Ovary (tissue), 10 donors: ENCODE measurements at regions of chr16 and their contacts with region 1.

Region 1: DNA sequence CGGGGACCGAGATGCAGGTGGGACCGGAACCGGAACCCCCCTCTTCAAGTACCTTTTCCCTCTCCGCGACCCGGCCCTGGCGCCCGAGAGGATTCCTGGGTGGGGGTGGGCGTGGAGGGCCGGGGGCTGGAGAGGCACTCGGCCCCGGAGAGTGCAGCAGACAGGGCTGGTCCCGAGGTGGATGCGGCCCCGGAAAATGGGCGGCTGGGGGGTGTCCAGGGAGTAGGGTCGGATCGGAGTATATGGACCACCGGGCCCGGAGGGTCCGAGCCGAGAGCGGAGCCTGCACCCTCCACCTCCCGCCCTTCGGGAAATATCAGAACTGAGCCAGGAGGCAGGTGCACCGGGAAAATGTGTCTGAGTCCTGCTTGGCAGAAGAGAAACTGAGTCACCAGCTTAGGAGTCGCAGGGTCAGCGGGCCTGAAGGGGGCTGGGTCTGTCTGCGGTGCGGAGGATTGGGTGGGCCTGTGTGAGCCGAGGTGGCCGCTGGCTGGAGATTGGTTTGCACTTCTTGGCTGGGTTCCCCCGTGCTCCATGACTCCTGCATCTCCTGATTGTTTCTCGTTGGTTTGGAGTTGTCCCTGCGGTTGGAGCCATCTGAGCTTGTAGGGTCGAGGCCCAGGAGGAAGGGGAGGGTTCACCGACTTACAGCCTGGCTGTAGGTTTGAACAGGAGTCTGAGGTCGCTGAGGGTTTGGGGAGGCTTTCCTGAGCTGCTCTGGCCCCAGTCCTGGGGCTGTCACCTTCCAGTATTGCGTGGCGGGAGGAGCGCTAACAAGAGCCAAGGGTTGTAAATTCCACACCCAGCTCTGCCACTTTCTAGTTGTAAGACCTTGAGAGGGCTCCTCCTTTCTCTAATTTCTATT is 518 bp downstream of the SH2B1 start:
- DNase-seq: peak; percentile 47 to 64 (median 55)
- H3K4me3 ChIP-seq: peak overlapping the region; percentile 98
- H3K27ac ChIP-seq: peak overlapping the region; percentile 79 to 85
- H3K4me1 ChIP-seq: peaks cover 2% of the 10 kb centered on the region
- H3K27me3 ChIP-seq: no peaks in the 10 kb centered on the region
- CTCF ChIP-seq: no peak
- EP300 ChIP-seq: no peak
- POLR2A ChIP-seq: no peak

Region 2: DNA sequence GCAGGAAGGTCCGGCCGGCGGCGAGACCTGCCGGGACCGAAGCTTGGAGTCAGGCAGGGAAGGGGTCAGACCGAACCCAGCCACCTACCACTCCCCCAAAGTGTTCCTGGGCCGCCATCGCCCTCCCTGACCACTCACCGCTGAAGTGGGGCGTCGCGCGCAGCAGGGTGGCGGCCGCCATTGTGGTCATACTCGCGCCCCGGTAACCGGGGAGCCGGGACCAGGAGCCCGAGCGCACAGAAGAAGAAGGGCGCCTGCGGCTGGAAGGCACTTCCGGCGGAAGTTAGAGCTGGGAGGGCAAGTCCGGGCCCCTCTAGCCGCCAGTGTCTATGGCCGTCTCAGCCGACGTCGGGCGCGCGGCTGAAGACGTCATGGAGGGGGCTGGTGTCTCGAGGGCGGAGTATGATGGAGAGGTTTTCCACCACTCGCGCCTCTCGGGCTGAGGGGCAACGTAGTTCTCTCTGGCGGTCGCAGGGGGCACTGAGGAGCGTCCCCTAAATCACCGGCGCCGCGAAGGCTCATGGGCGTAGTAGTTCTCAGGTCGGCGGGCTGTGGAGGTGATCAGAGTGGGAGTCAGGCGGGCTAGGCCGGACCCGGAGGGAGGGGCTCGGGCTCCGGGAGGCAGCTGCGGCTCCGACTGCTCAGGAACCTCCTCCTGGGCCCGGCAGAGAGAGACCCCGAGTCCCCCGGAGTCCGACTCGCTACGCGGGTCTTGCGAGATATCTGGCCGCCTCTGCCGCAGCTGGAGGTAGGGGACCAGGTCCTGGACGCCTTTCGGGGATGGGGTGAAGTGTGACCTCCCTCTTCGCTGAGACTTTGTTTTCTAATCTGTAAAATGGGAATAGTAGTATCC is 17.9 kb before region 1 on chr16 and contains the start of gene TUFM:
- intact Hi-C with region 1: loop called in 2 of 4 experiments (anchors 2 kb)
- DNase-seq: peak; percentile 97 to 98 (median 97)
- H3K4me3 ChIP-seq: peak within 1 kb of the TSS; percentile 99
- H3K27ac ChIP-seq: peak within 1 kb of the TSS; percentile 82 to 83
- H3K4me1 ChIP-seq: peaks cover 2% of the 10 kb centered on the region
- H3K27me3 ChIP-seq: no peaks in the 10 kb centered on the region
- CTCF ChIP-seq: peak; percentile 56 to 93 (median 82)
- EP300 ChIP-seq: no peak
- POLR2A ChIP-seq: peak; percentile 22
- total RNA-seq, gene TUFM: 75.7 to 123 (median 105) TPM

Region 3: DNA sequence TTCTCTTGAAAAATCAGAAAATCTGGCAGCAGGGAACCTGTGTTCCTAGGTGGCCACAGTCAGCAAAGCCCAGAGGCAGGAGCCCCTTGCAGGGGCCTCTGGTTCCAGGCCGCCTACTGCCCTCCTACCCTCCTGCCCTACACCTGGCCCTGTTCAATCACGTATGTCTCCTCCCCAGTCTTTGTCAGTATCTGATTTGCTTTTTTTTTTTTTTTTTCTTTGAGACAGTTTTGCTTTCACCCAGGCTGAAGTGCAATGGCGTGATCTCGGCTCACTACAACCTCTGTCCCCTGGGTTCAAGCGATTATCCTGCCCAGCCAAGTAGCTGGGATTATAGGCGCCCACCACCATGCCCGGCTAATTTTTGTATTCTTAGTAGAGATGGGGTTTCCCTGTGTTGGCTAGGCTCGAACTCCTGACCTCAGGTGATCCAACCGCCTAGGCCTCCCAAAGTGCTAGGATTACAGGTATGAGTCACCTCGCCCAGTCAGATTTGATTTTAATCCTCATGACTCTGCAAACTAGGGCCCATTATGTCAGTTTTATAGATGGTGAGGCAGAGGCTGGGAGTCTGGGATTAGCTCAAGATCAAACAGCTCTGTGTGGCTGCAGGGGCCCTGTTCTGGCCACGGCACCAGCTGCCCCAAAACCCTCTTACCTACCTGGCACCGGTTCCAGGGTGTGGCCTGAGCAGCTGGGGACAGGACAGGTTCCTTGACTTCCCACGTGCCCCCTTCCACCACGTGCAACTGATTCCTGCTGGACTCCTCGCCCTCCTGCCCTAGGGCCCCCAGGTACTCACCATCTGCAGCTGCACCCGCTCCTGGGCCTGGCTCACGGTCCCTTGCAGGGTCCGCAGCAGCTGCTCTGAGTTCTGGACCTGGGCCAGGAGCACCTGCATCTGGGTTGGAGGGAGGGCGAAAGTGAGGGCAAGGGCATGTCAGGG is 46.2 kb after region 1 on chr16:
- intact Hi-C with region 1: no loop called
- DNase-seq: no peak
- H3K4me3 ChIP-seq: no peak overlapping the region
- H3K27ac ChIP-seq: no peak overlapping the region
- H3K4me1 ChIP-seq: no peaks in the 10 kb centered on the region
- H3K27me3 ChIP-seq: no peaks in the 10 kb centered on the region
- CTCF ChIP-seq: no peak
- EP300 ChIP-seq: no peak
- POLR2A ChIP-seq: no peak

Region 4: DNA sequence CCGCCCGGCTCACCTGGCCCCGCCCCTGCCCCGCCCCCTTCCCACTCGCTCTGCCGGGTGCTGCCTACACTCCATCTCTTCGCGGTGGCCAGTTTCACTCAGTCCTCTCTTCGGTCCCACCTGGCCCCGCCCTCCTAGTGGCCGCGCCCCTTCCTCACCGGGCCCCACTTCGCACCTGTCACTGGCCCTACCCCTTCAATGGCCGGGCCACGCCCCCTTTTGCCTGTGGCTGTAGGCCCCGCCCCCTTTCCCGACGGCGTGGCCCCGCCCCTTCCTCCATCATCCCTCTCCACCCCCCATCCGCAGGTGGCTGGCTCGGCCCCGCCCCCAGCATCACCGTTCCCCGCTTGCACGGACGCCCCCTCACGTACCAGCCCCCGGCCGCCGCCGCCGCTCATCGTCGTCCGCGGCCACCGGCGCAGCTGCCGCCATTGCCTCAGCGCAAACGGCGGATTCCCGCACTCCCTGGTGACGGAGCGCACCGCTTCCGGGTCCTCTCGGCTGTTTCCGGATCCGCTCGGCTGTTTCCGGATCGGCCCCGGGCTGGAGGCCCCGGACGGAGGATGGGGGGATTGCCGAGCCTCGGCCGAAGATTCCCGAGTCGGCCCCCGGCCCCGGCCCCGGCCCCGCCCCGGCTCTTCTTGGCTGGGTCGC is 60.7 kb after region 1 on chr16 and contains the start of gene RABEP2:
- intact Hi-C with region 1: loop called in 1 of 4 experiments (anchors 10 kb)
- DNase-seq: peak; percentile 93 to 98 (median 96)
- H3K4me3 ChIP-seq: peak within 1 kb of the TSS; percentile 93
- H3K27ac ChIP-seq: peak within 1 kb of the TSS; percentile 70 to 93
- H3K4me1 ChIP-seq: peaks cover 4% of the 10 kb centered on the region
- H3K27me3 ChIP-seq: no peaks in the 10 kb centered on the region
- CTCF ChIP-seq: no peak
- EP300 ChIP-seq: no peak
- POLR2A ChIP-seq: peak; percentile 20
- total RNA-seq, gene RABEP2: 5.1 to 13.9 (median 11.3) TPM

Region 5: DNA sequence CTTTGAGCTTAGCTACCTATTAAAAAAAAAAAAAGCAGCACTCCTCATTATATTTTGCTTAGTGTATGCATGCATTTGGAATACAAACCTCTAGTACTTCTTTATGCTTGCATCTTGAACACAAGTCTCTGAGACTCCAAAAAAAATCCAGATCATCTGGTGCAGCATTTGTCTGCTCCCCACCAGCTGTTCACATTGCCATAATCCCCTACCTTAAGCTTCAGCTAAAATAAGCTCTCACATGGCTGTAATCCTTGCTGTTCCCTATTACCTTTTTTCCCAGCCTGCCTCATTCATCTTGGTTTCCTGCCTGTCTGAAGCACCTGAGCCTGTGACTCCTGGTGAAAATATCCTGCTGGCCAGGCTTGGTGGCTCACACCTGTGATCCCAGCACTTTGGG is 79.1 kb after region 1 on chr16:
- intact Hi-C with region 1: loop called in 1 of 4 experiments (anchors 5 kb)
- DNase-seq: no peak
- H3K4me3 ChIP-seq: no peak overlapping the region
- H3K27ac ChIP-seq: no peak overlapping the region
- H3K4me1 ChIP-seq: peaks cover 3% of the 10 kb centered on the region
- H3K27me3 ChIP-seq: no peaks in the 10 kb centered on the region
- CTCF ChIP-seq: no peak
- EP300 ChIP-seq: no peak
- POLR2A ChIP-seq: no peak